Naive thymus-derived CD4-positive, alpha-beta T cell (primary cell): ENCODE measurements at regions of chr5 and their contacts with region 1.

Region 1: DNA sequence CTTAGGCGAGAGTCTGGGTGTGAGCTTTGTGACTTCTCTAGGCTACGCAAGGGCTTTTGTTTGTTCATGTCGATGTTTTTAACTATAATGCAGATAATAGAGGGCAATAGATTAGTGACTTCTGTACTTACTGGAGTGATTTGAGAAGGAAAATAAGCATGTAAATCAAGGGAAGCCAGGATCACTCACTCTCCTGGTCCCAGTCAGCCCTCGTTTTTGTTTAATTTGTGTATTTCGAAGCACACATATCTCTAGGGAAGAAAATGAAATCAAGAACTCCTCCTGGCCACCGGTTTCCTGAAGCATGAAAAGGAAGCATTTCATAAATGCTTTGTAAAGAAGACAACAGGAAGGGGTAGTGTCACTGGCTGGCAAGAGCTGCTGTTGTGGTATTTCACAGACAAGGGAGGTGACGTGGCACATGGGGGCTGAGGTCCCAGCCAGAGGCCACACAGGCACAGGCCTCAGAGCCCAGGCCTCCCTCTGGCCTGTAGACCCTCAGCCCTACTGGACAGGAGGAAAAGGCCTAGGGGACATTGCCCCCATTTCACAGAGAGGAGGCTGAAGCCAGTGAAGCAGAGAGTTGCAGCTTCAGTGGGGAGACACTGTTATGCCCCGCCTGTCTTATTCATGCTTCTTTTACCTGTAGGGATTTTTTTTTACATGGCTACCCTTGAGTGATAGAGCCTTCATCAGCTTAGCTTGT is 34.1 kb downstream of the IRF1 start:
- DNase-seq: peak in 8 of 9 donors; percentile 55 to 80 (median 70)
- ATAC-seq: peak; percentile 84
- H3K4me3 ChIP-seq: peak overlapping the region; percentile 40
- H3K4me3 Mint-ChIP-seq: peak overlapping the region; percentile 60 to 85 (median 78)
- H3K27ac ChIP-seq: peak overlapping the region; percentile 77
- H3K27ac Mint-ChIP-seq: peak overlapping the region; percentile 93 to 100 (median 99)
- H3K4me1 ChIP-seq: peaks cover 89 to 96% of the 10 kb centered on the region in 2 donors
- H3K4me1 Mint-ChIP-seq: peaks cover 81 to 94% (median 91%) of the 10 kb centered on the region in 7 donors
- H3K27me3 ChIP-seq: no peaks in the 10 kb centered on the region
- H3K27me3 Mint-ChIP-seq: no peaks in the 10 kb centered on the region

Region 2: DNA sequence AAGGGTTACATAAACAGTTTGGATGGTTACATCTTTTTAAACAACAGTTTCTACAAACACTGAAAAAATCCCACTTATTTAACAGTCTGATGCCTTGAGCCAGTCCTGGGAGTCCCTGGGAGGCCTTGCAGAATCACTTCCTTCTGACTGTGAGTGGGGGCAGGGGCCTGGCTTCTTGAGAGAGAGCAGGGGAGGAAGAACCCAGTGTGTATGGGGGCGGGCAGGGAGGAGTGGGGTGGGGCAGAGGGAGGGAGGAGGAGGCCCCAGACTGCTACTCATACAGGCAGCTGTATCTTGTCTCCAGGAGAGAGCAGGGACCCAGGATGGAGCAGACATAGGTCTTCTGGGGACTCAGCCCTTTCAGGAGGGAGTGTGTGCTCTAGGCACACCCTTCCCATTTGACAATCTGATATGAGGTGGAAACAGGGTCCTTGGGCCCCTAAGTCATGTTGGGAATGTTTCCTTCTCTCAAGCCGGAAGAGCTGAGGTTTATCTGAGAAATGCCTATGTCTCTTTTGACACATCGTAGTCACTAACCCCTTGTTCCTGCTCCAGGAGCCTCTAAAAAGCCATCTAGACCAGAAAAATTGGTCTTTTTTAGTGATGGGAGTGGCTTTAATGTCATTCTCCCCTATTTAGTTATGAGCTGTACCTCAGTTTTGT is 18.7 kb before region 1 on chr5:
- CTCF ChIA-PET with region 1: interaction called, 27 read pairs
- POLR2A ChIA-PET with region 1: interaction called, 182 read pairs
- intact Hi-C with region 1: loop called in 1 of 2 experiments (anchors 1 kb)
- DNase-seq: peak in 8 of 9 donors; percentile 36 to 66 (median 56)
- ATAC-seq: peak; percentile 88
- H3K4me3 ChIP-seq: peak overlapping the region; percentile 25
- H3K4me3 Mint-ChIP-seq: peak overlapping the region; percentile 60 to 79 (median 68)
- H3K27ac ChIP-seq: peak overlapping the region; percentile 67
- H3K27ac Mint-ChIP-seq: peak overlapping the region; percentile 79 to 93 (median 85)
- H3K4me1 ChIP-seq: peaks cover 61 to 86% of the 10 kb centered on the region in 2 donors
- H3K4me1 Mint-ChIP-seq: peaks cover 68 to 96% (median 83%) of the 10 kb centered on the region in 7 donors
- H3K27me3 ChIP-seq: no peaks in the 10 kb centered on the region
- H3K27me3 Mint-ChIP-seq: no peaks in the 10 kb centered on the region

Region 3: GRCh38 chr5:132576123-132576522 is 119.7 kb after region 1 on chr5:
- CTCF ChIA-PET with region 1: no interaction called
- POLR2A ChIA-PET with region 1: no interaction called
- intact Hi-C with region 1: no loop called
- DNase-seq: no peak
- ATAC-seq: no peak
- H3K4me3 ChIP-seq: no peak overlapping the region
- H3K4me3 Mint-ChIP-seq: no peak overlapping the region
- H3K27ac ChIP-seq: no peak overlapping the region
- H3K27ac Mint-ChIP-seq: no peak overlapping the region
- H3K4me1 ChIP-seq: no peaks in the 10 kb centered on the region
- H3K4me1 Mint-ChIP-seq: peaks cover 0 to 11% (median under 1%) of the 10 kb centered on the region in 7 donors
- H3K27me3 ChIP-seq: no peaks in the 10 kb centered on the region
- H3K27me3 Mint-ChIP-seq: no peaks in the 10 kb centered on the region